ENCODE measurements at regions of chr1 and their contacts with region 1.

Region 1: DNA sequence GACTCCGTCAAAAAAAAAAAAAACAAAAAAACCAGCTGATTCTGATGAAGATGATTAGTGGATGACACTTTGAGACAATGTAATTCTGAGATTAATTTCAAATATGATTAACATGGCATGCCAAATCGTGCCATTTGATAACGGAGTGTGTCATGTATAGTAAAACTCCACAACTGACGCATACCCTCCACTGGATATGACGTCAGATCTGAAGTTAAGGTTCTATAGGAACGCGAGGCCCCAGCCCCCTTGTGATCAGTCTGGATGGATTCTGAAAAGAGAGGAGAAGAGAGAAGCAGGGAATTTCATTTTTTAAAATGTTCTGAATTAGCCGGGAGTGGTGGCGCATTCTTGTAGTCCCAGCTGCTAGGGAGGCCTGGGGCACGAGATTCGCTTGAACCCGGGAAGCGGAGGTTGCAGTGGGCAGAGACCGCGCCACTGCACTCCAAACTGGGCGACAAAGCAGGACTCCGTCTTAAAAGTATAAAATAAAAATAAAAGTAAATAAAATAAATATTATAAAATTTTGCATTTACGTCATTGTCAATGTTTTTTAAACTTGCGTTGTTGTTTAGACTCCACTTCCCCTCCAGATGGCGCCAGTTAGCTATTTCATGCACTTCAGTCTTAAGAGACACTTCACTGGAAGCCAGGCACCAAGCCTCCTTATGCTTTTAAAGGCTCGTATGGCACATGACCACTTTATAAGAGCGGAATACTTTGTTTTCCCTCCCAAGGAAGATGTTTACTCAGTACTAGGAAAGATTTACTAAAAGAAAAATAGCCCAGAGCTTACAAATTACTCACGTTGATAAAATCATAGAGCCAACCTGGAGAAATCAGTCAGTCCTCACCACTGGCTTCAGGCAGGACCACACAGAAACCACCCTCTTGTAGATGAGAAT is 65.5 kb downstream of the UBE2U start:
- DNase-seq: peak; percentile 85
- ATAC-seq: peak; percentile 96
- H3K4me3 ChIP-seq: no peak overlapping the region
- H3K27ac ChIP-seq: no peak overlapping the region
- H3K4me1 ChIP-seq: no peaks in the 10 kb centered on the region
- H3K27me3 ChIP-seq: peaks cover 9% of the 10 kb centered on the region
- CTCF ChIP-seq: peak; percentile 91
- POLR2A ChIP-seq: no peak
- RAD21 ChIP-seq: peak; percentile 91

Region 2: DNA sequence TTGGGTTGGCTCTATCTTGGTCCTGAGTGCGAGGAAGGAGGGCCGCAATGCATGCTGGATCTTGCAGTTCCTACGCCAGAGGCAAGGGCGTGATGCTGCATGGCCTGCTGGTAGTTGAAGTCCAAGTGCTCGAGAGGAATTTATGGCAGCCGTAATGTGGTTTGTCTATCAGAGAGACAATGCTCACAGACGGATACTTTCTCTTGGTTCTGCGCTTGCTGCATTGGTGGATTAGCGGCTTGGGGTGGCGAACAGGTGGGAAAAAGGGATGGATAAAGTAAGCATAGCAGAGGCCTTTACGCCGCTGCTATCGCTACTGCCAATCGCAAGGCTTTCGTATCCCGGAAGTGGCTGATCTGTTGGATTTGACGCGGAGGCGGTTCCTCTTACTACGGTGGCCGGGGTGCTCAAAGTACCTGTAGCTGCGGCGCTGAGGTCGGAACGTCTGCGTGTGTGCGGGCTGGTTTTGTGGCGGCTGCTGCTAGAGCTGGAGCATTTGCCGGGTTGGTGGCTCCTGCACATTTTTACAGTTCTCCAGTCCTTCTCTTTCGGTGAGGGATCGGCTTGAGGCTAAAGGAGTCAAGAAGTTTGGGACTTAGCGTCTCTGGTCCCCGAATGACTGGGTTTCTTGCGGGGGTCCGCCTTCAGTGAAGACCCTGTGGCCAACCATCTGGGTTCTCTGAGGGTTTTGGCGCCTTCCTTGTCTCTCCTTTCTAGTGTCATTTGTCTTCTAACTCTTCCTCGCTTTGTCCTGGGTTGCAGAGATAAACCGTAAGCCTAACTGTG is 1485.0 kb before region 1 on chr1 and contains the start of gene ATG4C:
- CTCF ChIA-PET with region 1: no interaction called
- POLR2A ChIA-PET with region 1: no interaction called
- dilution Hi-C with region 1: no loop called
- in situ Hi-C with region 1: no loop called
- intact Hi-C with region 1: no loop called
- DNase-seq: peak; percentile 97
- ATAC-seq: peak; percentile 95
- H3K4me3 ChIP-seq: peak within 1 kb of the TSS; percentile 61
- H3K27ac ChIP-seq: peak within 1 kb of the TSS; percentile 84
- H3K4me1 ChIP-seq: no peaks in the 10 kb centered on the region
- H3K27me3 ChIP-seq: no peaks in the 10 kb centered on the region
- CTCF ChIP-seq: no peak
- POLR2A ChIP-seq: no peak
- RAD21 ChIP-seq: no peak
- total RNA-seq, gene ATG4C: 7.2 and 9.7 TPM in 2 replicates

Region 3: DNA sequence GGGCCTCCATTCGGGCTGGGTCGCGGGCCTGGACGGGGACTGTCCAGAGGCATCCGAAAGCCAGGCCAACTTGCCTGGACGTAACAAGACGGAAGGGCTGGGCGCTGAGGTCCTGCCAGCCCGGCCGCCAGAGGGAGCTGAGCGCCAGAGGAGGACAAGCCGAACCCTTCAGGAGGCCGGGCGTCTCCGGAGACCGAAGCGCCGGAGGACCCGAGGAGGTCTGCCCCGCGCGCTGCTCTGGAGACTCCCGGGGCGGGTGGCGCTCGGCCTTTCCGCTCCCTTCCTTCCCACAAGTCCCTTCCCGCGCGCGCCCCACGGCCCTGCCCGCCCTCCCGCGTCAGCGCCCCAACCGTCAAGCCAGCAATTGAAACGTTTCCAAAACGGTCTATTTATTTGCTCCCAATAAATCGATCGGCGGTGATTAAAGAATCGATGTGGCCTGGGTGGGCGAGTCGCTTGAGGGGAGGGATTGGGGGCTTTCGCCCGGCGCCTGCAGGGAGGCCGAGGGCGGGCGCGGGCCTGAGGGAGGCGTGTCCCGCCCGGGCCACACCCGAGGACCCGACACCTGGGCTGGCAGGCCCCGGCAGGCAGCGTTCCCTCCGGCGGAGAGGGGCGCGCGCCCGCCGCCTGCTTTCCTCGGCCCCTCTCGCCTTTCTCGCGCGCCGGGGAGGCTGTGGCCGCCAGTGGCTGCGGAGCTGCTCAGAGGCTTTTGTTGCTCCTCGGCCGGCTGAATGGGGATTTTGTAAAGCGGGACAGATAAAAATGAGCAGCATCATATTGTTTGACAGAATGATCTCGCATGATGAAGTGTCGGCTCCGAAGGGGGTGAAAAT is 951.7 kb before region 1 on chr1:
- CTCF ChIA-PET with region 1: no interaction called
- POLR2A ChIA-PET with region 1: no interaction called
- dilution Hi-C with region 1: no loop called
- in situ Hi-C with region 1: loop called (anchors 25 kb)
- intact Hi-C with region 1: no loop called
- DNase-seq: peak; percentile 41
- ATAC-seq: peak; percentile 83
- H3K4me3 ChIP-seq: peak overlapping the region; percentile 21
- H3K27ac ChIP-seq: no peak overlapping the region
- H3K4me1 ChIP-seq: no peaks in the 10 kb centered on the region
- H3K27me3 ChIP-seq: peaks cover 71% of the 10 kb centered on the region
- CTCF ChIP-seq: peak; percentile 55
- POLR2A ChIP-seq: no peak
- RAD21 ChIP-seq: peak; percentile 39

Region 4: DNA sequence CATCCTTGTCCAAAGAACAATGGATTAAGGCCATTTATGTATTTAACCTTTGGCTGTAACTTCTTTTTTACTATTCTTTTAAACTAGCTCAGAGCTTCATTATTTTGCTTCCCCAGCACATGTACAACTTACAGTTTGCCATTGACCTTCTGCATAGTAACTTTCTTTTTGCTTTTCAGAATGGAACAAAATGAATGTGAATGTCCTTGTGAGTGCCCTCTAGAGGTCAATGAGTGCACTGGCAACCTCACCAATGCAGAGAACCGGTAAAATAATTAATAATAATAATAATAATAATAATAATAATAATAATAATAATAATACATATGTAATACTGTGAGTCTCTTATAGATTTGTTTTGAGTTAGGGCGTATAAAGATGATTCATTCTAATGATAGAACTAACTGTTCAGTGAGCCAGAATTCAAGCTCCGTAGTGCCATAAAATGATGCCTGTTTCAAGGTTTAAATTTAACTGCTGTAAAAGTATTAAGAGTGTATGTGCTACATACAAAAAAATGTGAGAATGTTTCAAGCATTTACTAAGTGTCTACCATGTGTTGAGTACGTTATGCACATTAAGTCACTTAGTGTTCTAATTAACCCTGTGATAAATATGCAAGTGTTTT is 406.9 kb after region 1 on chr1:
- CTCF ChIA-PET with region 1: interaction called, 4 read pairs
- POLR2A ChIA-PET with region 1: no interaction called
- dilution Hi-C with region 1: no loop called
- in situ Hi-C with region 1: loop called (anchors 10 kb)
- intact Hi-C with region 1: loop called (anchors 1 kb)
- DNase-seq: peak; percentile 37
- ATAC-seq: peak; percentile 80
- H3K4me3 ChIP-seq: no peak overlapping the region
- H3K27ac ChIP-seq: no peak overlapping the region
- H3K4me1 ChIP-seq: no peaks in the 10 kb centered on the region
- H3K27me3 ChIP-seq: no peaks in the 10 kb centered on the region
- CTCF ChIP-seq: peak; percentile 60
- POLR2A ChIP-seq: no peak
- RAD21 ChIP-seq: peak; percentile 52

Region 5: DNA sequence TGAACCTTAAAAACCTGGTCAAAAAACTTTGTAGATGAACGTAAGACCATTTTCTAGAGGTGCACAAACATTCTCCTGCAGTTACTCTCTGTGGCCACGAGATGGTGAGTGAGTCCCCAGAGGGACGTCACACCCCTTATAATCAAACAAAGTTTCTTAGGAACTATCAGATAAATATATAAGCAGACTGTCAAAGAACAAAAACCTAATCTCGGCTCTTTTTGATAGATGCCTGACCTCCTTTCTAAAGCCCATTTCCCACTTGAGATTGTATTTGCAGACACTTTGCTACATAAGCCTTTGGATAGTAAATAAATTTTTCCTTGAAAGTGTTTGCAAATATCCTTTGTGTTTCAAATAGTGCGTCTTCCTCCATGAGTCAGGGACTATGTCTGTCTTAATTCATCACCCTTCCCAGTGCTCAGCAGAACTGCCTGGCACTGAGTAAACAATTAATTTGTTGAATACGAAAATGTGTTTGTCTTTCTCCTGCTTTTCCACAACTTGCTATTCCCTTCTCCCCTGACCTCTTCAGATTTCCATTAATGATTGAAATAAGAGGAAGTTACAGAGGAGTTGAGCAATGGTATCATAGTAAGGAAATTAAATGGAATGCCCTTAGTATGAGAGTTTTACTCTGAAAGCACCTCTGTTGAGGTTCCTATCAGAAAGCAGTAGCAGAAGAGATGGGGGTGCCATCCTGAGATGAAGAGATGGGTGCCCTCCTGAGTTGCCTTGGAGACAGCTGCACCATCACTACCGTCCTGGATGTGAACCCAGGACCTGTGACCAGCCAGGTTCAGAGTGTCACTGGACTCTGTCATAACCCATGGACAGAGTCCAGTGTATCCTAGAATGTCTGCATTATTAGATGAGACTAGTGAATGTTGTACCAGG is 418.2 kb after region 1 on chr1:
- CTCF ChIA-PET with region 1: no interaction called
- POLR2A ChIA-PET with region 1: no interaction called
- dilution Hi-C with region 1: no loop called
- in situ Hi-C with region 1: no loop called
- intact Hi-C with region 1: loop called (anchors 1 kb)
- DNase-seq: peak; percentile 65
- ATAC-seq: peak; percentile 87
- H3K4me3 ChIP-seq: no peak overlapping the region
- H3K27ac ChIP-seq: no peak overlapping the region
- H3K4me1 ChIP-seq: peaks cover 12% of the 10 kb centered on the region
- H3K27me3 ChIP-seq: no peaks in the 10 kb centered on the region
- CTCF ChIP-seq: peak; percentile 84
- POLR2A ChIP-seq: no peak
- RAD21 ChIP-seq: peak; percentile 69

Region 6: GRCh38 chr1:64823691-64824476 is 555.0 kb after region 1 on chr1:
- CTCF ChIA-PET with region 1: interaction called, 6 read pairs
- POLR2A ChIA-PET with region 1: no interaction called
- dilution Hi-C with region 1: no loop called
- in situ Hi-C with region 1: loop called (anchors 5 kb)
- intact Hi-C with region 1: loop called (anchors 1 kb)
- DNase-seq: peak; percentile 81
- ATAC-seq: peak; percentile 82
- H3K4me3 ChIP-seq: no peak overlapping the region
- H3K27ac ChIP-seq: no peak overlapping the region
- H3K4me1 ChIP-seq: peaks cover 6% of the 10 kb centered on the region; the same call in 1 of the 2 replicates
- H3K27me3 ChIP-seq: no peaks in the 10 kb centered on the region
- CTCF ChIP-seq: peak; percentile 87
- POLR2A ChIP-seq: no peak
- RAD21 ChIP-seq: peak; percentile 91

Region 7: DNA sequence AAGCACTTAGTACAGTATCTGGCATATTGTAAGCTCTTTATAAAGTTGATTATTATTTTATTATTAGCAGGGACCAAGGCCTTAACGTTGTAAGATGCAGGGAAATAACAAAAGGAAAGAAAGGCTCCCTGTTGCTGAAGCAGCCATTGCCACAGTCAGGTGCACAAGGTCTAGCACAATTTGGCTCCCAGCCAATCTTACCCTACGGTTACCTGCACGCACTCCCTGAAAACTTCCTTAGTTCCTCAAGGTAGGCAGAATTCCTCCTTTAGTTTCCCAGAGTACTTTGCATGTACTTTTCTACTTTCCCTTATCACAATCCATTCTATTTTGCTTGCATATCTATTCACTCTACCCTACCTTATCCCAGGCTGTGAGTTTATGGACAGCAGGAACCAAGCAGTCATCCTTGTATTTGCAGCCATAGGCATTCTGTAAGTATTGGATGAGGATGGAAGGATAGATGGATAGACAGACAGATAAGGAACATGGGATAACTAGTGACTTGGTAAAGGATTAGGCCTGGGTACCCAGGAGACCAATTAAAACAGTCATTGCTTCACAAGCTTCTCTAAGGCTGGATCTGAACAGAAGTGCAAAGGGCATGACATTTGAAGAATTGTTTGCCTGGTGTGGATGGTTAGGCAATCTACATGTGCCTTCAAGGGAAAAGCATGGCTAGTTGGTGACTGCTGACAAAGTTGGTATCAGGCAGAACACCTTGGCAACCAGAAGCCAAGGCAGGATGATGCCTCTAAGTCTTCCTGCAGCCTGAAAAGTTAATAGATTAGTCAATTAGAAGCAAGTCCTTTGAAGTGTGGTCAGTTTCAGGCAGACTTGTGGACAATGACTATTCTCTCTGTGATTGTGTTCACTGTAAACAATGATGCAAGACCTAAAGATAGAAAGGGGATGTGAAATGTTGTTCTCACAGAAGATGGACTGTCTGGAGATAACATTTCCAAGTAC is 718.3 kb after region 1 on chr1:
- CTCF ChIA-PET with region 1: no interaction called
- POLR2A ChIA-PET with region 1: no interaction called
- dilution Hi-C with region 1: no loop called
- in situ Hi-C with region 1: loop called (anchors 25 kb)
- intact Hi-C with region 1: no loop called
- DNase-seq: peak; percentile 42
- ATAC-seq: no peak
- H3K4me3 ChIP-seq: no peak overlapping the region
- H3K27ac ChIP-seq: no peak overlapping the region
- H3K4me1 ChIP-seq: peaks cover 4% of the 10 kb centered on the region
- H3K27me3 ChIP-seq: no peaks in the 10 kb centered on the region
- CTCF ChIP-seq: no peak
- POLR2A ChIP-seq: no peak
- RAD21 ChIP-seq: no peak

Region 8: DNA sequence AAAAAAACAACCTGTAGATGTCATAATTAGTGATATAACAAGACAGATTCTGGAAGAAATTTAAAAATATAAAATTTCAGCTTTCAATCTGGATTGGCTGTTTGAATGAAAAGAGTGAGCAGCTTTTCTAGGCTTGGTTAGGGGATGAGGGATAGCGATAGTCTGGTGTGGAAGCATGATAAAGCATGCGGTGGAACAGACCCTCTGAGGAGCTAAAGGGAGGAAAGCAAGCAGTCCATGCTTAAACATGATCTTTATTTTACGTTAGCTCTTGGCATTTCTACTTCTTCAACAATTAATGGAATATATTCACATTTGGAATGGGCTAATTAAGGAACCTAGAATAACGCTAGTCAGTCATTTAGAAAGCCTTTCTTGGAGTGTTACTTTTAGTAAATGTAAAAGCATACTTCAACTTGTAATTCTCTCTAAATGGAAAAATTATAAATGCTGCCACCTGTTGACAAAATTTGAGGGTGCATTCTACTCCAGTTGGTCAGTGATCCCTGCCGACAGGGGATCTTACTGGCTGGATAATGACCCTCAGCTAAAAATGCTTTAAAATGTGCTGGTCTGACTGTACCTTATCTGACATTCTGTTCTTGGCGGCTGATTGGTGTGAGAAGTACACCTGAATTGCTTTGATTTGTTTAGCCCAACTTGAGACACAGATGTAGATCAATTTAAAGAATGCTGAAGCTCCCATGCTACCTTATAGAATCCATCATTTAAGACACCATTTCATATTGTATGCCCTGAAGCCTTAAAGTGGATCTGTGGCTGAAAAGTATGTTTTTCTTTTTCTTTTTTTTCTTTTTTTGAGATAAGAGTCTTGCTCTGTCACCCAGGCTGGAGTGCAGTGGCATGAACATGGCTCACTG is 940.3 kb after region 1 on chr1:
- CTCF ChIA-PET with region 1: no interaction called
- POLR2A ChIA-PET with region 1: no interaction called
- dilution Hi-C with region 1: no loop called
- in situ Hi-C with region 1: no loop called
- intact Hi-C with region 1: loop called (anchors 2 kb)
- DNase-seq: peak; percentile 47
- ATAC-seq: peak; percentile 81
- H3K4me3 ChIP-seq: no peak overlapping the region
- H3K27ac ChIP-seq: no peak overlapping the region
- H3K4me1 ChIP-seq: no peaks in the 10 kb centered on the region; the same call in 1 of the 2 replicates
- H3K27me3 ChIP-seq: no peaks in the 10 kb centered on the region
- CTCF ChIP-seq: peak; percentile 62
- POLR2A ChIP-seq: no peak
- RAD21 ChIP-seq: peak; percentile 47